GM12878 (cell line): ENCODE measurements at regions of chr3 and their contacts with region 1.

Region 1: DNA sequence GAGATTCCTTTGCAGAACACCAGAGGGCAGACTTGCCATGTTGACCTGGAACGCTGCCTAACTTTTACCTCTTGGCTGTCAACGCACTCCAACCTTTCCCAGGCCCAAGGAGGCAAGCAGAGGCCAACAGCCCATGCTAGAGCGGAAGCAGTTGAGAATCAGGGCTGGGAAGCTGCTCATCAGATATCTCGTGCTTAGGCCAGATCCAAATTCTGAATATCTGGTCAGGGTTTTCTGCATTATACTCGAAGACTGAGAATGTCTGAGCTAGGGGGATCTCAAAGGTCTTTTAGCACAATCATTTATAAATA is 2.5 kb downstream of the XIRP1 start:
- DNase-seq: peak; percentile 35
- ATAC-seq: peak; percentile 83
- H3K4me3 ChIP-seq: no peak overlapping the region
- H3K27ac ChIP-seq: no peak overlapping the region
- H3K4me1 ChIP-seq: peaks cover 3% of the 10 kb centered on the region
- H3K27me3 ChIP-seq: no peaks in the 10 kb centered on the region
- CTCF ChIP-seq: peak; percentile 69 to 86 (median 82)
- EP300 ChIP-seq: no peak
- POLR2A ChIP-seq: no peak
- RAD21 ChIP-seq: peak; percentile 91

Region 2: GRCh38 chr3:38662544-38662943 is 527.4 kb before region 1 on chr3:
- CTCF ChIA-PET with region 1: no interaction called
- POLR2A ChIA-PET with region 1: no interaction called
- RAD21 ChIA-PET with region 1: no interaction called
- SMC1A ChIA-PET with region 1: no interaction called
- in situ Hi-C with region 1: no loop called
- intact Hi-C with region 1: no loop called
- DNase-seq: no peak
- ATAC-seq: peak; percentile 45
- H3K4me3 ChIP-seq: no peak overlapping the region
- H3K27ac ChIP-seq: no peak overlapping the region
- H3K4me1 ChIP-seq: no peaks in the 10 kb centered on the region
- H3K27me3 ChIP-seq: no peaks in the 10 kb centered on the region
- CTCF ChIP-seq: peak; percentile 23 to 40 (median 28); a peak in 4 of 6 replicates
- EP300 ChIP-seq: no peak
- POLR2A ChIP-seq: no peak
- RAD21 ChIP-seq: 0 out of 2 replicates have a peak, but pooled peaks have one; percentile 24

Region 3: DNA sequence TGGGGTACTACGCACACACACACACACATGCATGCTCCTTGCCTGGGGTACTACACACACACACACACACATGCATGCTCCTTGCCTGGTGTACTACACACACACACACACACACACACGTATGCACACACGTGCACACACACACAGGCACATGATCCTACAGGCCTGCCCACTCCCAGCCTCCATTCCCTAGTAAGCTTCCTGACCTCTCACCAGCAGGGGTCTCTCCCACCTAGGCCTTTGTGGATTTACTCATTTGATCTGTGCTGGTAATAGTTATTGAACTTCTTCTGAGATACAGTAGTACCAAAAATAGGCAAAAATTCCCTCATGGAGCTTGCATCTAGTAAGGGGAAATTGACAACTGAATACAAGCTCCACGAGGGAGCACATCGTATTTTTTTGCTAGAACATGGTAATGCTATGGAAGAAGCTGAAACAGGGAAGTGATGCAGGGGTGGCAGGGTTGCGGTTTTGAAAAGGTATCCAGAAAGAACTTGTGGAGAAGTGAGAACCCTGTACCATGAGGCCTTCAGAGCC is 63.3 kb before region 1 on chr3:
- CTCF ChIA-PET with region 1: interaction called, 37 read pairs
- POLR2A ChIA-PET with region 1: interaction called, 3 read pairs
- RAD21 ChIA-PET with region 1: no interaction called
- SMC1A ChIA-PET with region 1: interaction called, 27 read pairs
- in situ Hi-C with region 1: no loop called
- intact Hi-C with region 1: no loop called
- DNase-seq: no peak
- ATAC-seq: peak; percentile 67
- H3K4me3 ChIP-seq: no peak overlapping the region
- H3K27ac ChIP-seq: no peak overlapping the region
- H3K4me1 ChIP-seq: peaks cover 25% of the 10 kb centered on the region
- H3K27me3 ChIP-seq: no peaks in the 10 kb centered on the region
- CTCF ChIP-seq: peak; percentile 37 to 46 (median 44); a peak in 5 of 6 replicates
- EP300 ChIP-seq: no peak
- POLR2A ChIP-seq: no peak
- RAD21 ChIP-seq: peak; percentile 73

Region 4: DNA sequence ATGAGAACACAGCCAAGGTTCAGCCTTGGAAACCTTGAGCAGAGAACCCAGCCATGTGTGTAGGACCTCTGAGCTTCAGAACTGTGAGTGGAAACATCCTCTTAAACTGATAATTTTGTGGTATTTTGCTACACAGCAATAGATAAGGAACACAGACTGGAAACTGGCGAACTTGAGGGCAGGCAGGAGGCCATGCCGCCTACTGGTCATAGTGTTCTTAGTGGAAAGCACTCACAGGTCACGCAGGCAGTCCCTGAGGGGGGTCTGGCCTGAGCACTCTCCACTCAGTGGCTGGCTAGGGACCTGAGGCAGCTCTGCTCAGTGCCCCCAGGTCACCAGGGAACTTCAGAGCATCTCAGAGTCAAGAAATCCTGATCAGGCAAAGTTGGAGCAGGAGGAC is 12.2 kb after region 1 on chr3:
- CTCF ChIA-PET with region 1: interaction called, 38 read pairs
- POLR2A ChIA-PET with region 1: interaction called, 4 read pairs
- RAD21 ChIA-PET with region 1: interaction called, 6 read pairs
- SMC1A ChIA-PET with region 1: interaction called, 12 read pairs
- in situ Hi-C with region 1: no loop called
- intact Hi-C with region 1: no loop called
- DNase-seq: no peak
- ATAC-seq: peak; percentile 23
- H3K4me3 ChIP-seq: no peak overlapping the region
- H3K27ac ChIP-seq: no peak overlapping the region
- H3K4me1 ChIP-seq: no peaks in the 10 kb centered on the region; the same call in 1 of the 2 replicates
- H3K27me3 ChIP-seq: 0 out of 4 replicates have a peak, but pooled peaks cover 0 to 1% of the 10 kb centered on the region in 2 experiments
- CTCF ChIP-seq: no peak
- EP300 ChIP-seq: no peak
- POLR2A ChIP-seq: no peak
- RAD21 ChIP-seq: no peak

Region 5: DNA sequence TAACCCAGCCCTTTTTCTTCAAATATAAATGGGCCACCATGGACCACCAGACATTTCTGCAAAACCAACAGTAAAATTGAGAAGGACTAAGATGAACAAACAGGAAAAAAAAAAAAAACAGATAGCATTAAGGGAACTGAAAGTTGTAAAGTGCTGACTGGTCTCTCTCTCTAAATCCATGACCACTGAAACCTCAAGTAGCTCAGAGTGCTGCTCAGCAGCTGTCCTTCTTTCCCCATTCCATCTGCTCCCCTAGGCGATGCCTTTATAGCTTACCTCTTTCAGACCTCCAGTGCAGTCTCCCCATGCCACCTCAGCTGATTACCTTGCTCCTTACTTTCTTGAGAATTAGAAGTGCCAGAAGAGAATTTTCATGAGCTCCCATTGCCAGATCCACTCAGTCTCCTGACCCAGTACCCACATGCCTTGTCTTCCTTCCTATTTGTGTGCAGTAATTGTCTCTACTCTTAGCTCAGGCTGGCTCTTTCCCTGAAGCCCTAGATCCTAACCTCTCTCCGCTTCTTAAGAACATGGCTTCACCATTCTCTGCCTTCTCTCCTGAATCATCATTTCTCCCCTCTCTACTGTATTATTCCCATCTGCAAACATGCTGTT is 26.4 kb after region 1 on chr3:
- CTCF ChIA-PET with region 1: interaction called, 15 read pairs
- POLR2A ChIA-PET with region 1: no interaction called
- RAD21 ChIA-PET with region 1: interaction called, 31 read pairs
- SMC1A ChIA-PET with region 1: interaction called, 18 read pairs
- in situ Hi-C with region 1: no loop called
- intact Hi-C with region 1: no loop called
- DNase-seq: peak; percentile 68
- ATAC-seq: peak; percentile 97
- H3K4me3 ChIP-seq: no peak overlapping the region
- H3K27ac ChIP-seq: no peak overlapping the region; the same call in 1 of the 2 replicates
- H3K4me1 ChIP-seq: peaks cover 26% of the 10 kb centered on the region
- H3K27me3 ChIP-seq: no peaks in the 10 kb centered on the region
- CTCF ChIP-seq: no peak
- EP300 ChIP-seq: peak; percentile 85 to 96
- POLR2A ChIP-seq: no peak
- RAD21 ChIP-seq: no peak

Region 6: GRCh38 chr3:39279745-39280517 is 90.0 kb after region 1 on chr3 and contains the start of gene CX3CR1:
- CTCF ChIA-PET with region 1: interaction called, 756 read pairs
- POLR2A ChIA-PET with region 1: interaction called, 3 read pairs
- RAD21 ChIA-PET with region 1: interaction called, 456 read pairs
- SMC1A ChIA-PET with region 1: interaction called, 648 read pairs
- in situ Hi-C with region 1: loop called (anchors 5 kb)
- intact Hi-C with region 1: no loop called
- DNase-seq: no peak
- ATAC-seq: peak; percentile 21; the same call in 1 of the 3 replicates
- H3K4me3 ChIP-seq: no peak within 1 kb of the TSS
- H3K27ac ChIP-seq: no peak within 1 kb of the TSS
- H3K4me1 ChIP-seq: peaks cover 6% of the 10 kb centered on the region
- H3K27me3 ChIP-seq: peaks cover 0 to 3% of the 10 kb centered on the region in 2 experiments; a peak in 1 of 4 replicates
- CTCF ChIP-seq: no peak
- EP300 ChIP-seq: no peak
- POLR2A ChIP-seq: no peak
- RAD21 ChIP-seq: no peak
- polyA plus RNA-seq, gene CX3CR1: 0.05 to 0.09 TPM

Region 7: DNA sequence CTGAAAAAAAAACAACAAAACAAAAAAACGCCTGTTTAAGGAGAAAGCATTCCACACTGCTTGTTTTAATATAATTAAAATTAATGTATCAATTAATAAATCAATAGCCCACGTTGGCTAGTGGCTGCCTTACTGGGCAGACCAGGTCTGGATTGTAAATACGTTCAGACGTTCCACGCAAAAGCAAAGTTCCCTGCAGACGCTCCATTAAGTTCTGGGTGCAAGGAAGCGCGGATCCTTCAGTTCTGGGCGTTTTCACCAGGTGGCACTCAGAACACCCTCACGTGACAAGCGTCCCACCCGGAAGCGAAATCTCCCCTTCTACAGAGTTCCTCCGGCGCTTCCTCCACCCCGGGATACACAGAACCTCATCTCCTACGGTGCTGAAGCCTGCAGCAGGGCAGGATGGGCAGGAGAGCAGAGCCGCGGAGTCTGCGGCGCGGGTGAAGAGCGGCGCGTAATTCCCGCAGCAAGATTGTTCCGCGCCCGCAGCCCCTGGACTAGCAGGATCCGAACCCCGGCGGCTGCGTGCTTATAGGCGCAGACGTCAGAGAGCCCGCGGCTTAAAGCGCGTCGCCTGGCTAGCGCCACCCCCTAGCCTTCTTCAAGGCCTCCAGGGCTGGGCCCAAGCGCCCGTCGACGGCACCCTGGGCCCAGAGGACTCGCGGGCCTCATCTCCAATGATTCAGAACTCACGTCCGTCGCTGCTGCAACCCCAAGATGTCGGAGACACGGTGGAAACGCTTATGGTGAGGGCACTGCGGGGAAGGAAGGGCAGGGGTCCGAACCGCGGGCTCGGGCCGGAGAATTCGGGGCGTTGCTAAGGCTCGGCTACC is 193.3 kb after region 1 on chr3 and contains the start of gene SLC25A38:
- CTCF ChIA-PET with region 1: interaction called, 55 read pairs
- POLR2A ChIA-PET with region 1: no interaction called
- RAD21 ChIA-PET with region 1: interaction called, 21 read pairs
- SMC1A ChIA-PET with region 1: interaction called, 17 read pairs
- in situ Hi-C with region 1: loop called (anchors 5 kb)
- intact Hi-C with region 1: loop called (anchors 1 kb)
- DNase-seq: no peak
- ATAC-seq: peak; percentile 84
- H3K4me3 ChIP-seq: peak within 1 kb of the TSS; percentile 89
- H3K27ac ChIP-seq: peak within 1 kb of the TSS; percentile 84
- H3K4me1 ChIP-seq: peaks cover 7% of the 10 kb centered on the region
- H3K27me3 ChIP-seq: no peaks in the 10 kb centered on the region
- CTCF ChIP-seq: peak; percentile 35 to 46 (median 36); a peak in 5 of 6 replicates
- EP300 ChIP-seq: no peak
- POLR2A ChIP-seq: peak; percentile 71
- RAD21 ChIP-seq: no peak; the same call in 1 of the 2 replicates
- polyA plus RNA-seq, gene SLC25A38: 15.2 to 21.8 TPM

Region 8: DNA sequence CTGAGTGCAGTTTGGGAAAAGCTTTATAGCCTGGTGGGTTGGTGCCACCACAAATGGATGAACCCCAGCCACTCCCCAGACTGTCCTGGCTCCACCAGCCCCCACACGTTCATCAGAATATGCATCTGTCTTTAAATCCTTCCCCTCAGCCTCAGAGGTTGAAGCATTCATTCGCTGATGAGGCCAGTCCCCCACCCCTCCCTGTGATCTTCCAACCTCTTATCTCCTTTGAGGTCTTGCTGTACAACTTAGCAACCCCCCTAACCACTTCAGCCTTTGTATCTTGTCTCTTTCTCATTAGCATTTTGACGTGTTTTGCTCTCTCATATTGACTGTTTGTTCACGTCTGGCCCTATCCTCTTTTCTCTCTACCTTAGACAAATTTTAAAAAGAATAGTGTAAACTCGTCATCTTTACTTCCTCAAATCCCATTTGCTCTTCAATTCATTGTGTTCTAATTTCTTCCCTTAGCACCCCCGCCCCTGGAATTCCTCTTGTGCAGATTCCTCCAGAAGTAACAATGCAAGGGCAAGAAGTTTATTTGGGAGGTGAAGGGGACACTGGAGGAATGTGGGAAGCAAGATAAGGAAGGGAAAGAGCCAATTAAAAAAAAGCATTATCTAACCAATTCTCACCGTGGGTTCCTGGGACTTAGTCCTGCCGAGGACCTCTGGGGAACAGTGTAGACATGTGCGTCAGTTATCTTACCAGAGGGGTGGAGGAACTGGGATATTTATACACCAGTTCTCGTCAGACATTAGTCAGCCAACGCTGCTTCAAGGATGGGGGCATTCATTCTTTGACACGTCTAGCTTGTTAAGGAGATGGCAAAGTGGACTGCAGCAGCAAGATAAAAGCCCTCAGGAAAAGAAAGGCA is 316.2 kb after region 1 on chr3:
- CTCF ChIA-PET with region 1: no interaction called
- POLR2A ChIA-PET with region 1: no interaction called
- RAD21 ChIA-PET with region 1: no interaction called
- SMC1A ChIA-PET with region 1: no interaction called
- in situ Hi-C with region 1: no loop called
- intact Hi-C with region 1: no loop called
- DNase-seq: no peak
- ATAC-seq: peak; percentile 27
- H3K4me3 ChIP-seq: no peak overlapping the region
- H3K27ac ChIP-seq: no peak overlapping the region
- H3K4me1 ChIP-seq: no peaks in the 10 kb centered on the region
- H3K27me3 ChIP-seq: peaks cover 0 to 12% of the 10 kb centered on the region in 2 experiments
- CTCF ChIP-seq: no peak
- EP300 ChIP-seq: no peak
- POLR2A ChIP-seq: no peak
- RAD21 ChIP-seq: no peak